ENCODE measurements at regions of chr2 and their contacts with region 1.

Region 1: GRCh38 chr2:98253461-98254070 is 92.7 kb upstream of the CNGA3 start:
- DNase-seq: peak; percentile 26 to 62 (median 47)
- H3K4me3 ChIP-seq: no peak overlapping the region
- H3K27ac ChIP-seq: no peak overlapping the region
- H3K4me1 ChIP-seq: peaks cover 11% of the 10 kb centered on the region
- H3K27me3 ChIP-seq: no peaks in the 10 kb centered on the region
- CTCF ChIP-seq: no peak
- EP300 ChIP-seq: no peak
- POLR2A ChIP-seq: no peak

Region 2: GRCh38 chr2:97798416-97798815 is 455.1 kb before region 1 on chr2:
- intact Hi-C with region 1: no loop called
- DNase-seq: no peak
- H3K4me3 ChIP-seq: no peak overlapping the region
- H3K27ac ChIP-seq: no peak overlapping the region
- H3K4me1 ChIP-seq: no peaks in the 10 kb centered on the region
- H3K27me3 ChIP-seq: no peaks in the 10 kb centered on the region
- CTCF ChIP-seq: no peak
- EP300 ChIP-seq: no peak
- POLR2A ChIP-seq: no peak

Region 3: DNA sequence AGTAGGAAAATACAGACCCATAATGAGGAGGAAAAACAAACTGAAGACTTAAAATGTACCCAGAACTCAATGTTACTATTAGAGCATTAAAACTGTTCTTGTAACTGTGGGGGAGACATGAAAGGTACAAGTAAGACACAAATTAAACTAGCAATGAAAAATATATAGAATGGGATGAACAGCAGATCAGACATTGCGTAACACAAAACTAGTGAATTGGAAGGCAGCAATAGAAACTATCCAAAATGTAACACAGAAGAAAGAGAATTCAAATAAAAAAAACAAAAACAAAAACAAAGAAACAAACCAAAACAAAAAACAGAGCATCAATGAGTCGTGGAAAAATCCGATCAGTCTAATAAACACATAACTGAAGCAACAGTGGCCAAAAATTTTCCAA is 34.4 kb before region 1 on chr2:
- intact Hi-C with region 1: loop called in 1 of 4 experiments (anchors 2 kb)
- DNase-seq: no peak
- H3K4me3 ChIP-seq: no peak overlapping the region
- H3K27ac ChIP-seq: no peak overlapping the region
- H3K4me1 ChIP-seq: no peaks in the 10 kb centered on the region
- H3K27me3 ChIP-seq: no peaks in the 10 kb centered on the region
- CTCF ChIP-seq: no peak
- EP300 ChIP-seq: no peak
- POLR2A ChIP-seq: no peak

Measured in ovary (tissue), 10 donors.